T-cell (primary cell): ENCODE measurements at regions of chr2 and their contacts with region 1.

Region 1: DNA sequence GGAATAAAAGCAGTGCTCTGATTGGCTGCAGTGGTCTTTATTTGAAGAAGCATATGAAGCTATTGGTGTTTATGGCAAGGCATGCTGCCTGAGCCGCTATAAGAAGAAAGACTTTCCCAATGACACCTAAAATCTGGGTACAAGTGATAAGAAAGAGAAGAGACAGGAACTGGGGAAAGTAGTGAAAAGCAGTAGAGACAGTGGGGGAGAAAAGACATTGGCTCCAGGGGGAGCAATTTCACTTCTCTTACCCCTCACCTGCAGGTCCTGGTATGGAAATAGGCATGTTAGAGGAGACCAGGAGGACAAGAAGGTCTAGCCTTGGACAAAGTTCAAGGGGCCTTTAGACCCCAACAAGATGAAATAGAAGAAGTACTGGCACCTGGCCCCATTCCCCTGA is 47.1 kb downstream of the PLCL1 start:
- DNase-seq: peak in 1 of 35 experiments; percentile 38
- ATAC-seq: no peak
- H3K4me3 ChIP-seq: no peak overlapping the region
- H3K4me3 Mint-ChIP-seq: peak overlapping the region in 1 of 3 donors; percentile 1
- H3K27ac ChIP-seq: no peak overlapping the region
- H3K27ac Mint-ChIP-seq: peak overlapping the region; percentile 36 to 46
- H3K4me1 ChIP-seq: peaks cover 7 to 38% of the 10 kb centered on the region in 2 experiments
- H3K4me1 Mint-ChIP-seq: peaks cover 80 to 89% (median 85%) of the 10 kb centered on the region in 3 donors
- H3K27me3 ChIP-seq: no peaks in the 10 kb centered on the region
- H3K27me3 Mint-ChIP-seq: no peaks in the 10 kb centered on the region

Region 2: GRCh38 chr2:197793456-197793855 is 58.0 kb before region 1 on chr2:
- CTCF ChIA-PET with region 1: no interaction called
- POLR2A ChIA-PET with region 1: no interaction called
- DNase-seq: no peak
- ATAC-seq: no peak
- H3K4me3 ChIP-seq: no peak overlapping the region
- H3K4me3 Mint-ChIP-seq: no peak overlapping the region
- H3K27ac ChIP-seq: no peak overlapping the region
- H3K27ac Mint-ChIP-seq: no peak overlapping the region
- H3K4me1 ChIP-seq: no peaks in the 10 kb centered on the region
- H3K4me1 Mint-ChIP-seq: no peaks in the 10 kb centered on the region
- H3K27me3 ChIP-seq: peaks cover 2 to 3% of the 10 kb centered on the region in 2 experiments
- H3K27me3 Mint-ChIP-seq: peaks cover 21 to 26% of the 10 kb centered on the region in 2 donors

Region 3: GRCh38 chr2:197838036-197838435 is 13.4 kb before region 1 on chr2:
- CTCF ChIA-PET with region 1: interaction called, 4 to 15 read pairs
- POLR2A ChIA-PET with region 1: interaction called, 8 to 9 read pairs
- DNase-seq: peak in 10 of 35 experiments; percentile 0 to 63 (median 8)
- ATAC-seq: peak; percentile 84 to 92 (median 86)
- H3K4me3 ChIP-seq: peak overlapping the region in 1 of 2 donors; percentile 17
- H3K4me3 Mint-ChIP-seq: peak overlapping the region; percentile 65 to 69 (median 65)
- H3K27ac ChIP-seq: peak overlapping the region; percentile 83
- H3K27ac Mint-ChIP-seq: peak overlapping the region; percentile 91 to 92
- H3K4me1 ChIP-seq: peaks cover 14 to 33% of the 10 kb centered on the region in 2 experiments
- H3K4me1 Mint-ChIP-seq: peaks cover 61 to 65% (median 64%) of the 10 kb centered on the region in 3 donors
- H3K27me3 ChIP-seq: no peaks in the 10 kb centered on the region
- H3K27me3 Mint-ChIP-seq: no peaks in the 10 kb centered on the region

Region 4: GRCh38 chr2:197873293-197873701 is 21.8 kb after region 1 on chr2:
- CTCF ChIA-PET with region 1: interaction called, 3 to 13 read pairs
- POLR2A ChIA-PET with region 1: interaction called in 1 of 2 experiments, 3 read pairs
- DNase-seq: no peak
- ATAC-seq: no peak
- H3K4me3 ChIP-seq: no peak overlapping the region
- H3K4me3 Mint-ChIP-seq: no peak overlapping the region
- H3K27ac ChIP-seq: no peak overlapping the region
- H3K27ac Mint-ChIP-seq: no peak overlapping the region
- H3K4me1 ChIP-seq: peaks cover 25 to 44% of the 10 kb centered on the region in 2 experiments
- H3K4me1 Mint-ChIP-seq: peaks cover 56 to 78% (median 63%) of the 10 kb centered on the region in 3 donors
- H3K27me3 ChIP-seq: no peaks in the 10 kb centered on the region
- H3K27me3 Mint-ChIP-seq: no peaks in the 10 kb centered on the region

Region 5: GRCh38 chr2:198036029-198036879 is 184.8 kb after region 1 on chr2:
- CTCF ChIA-PET with region 1: no interaction called
- POLR2A ChIA-PET with region 1: interaction called in 1 of 2 experiments, 15 read pairs
- DNase-seq: no peak
- ATAC-seq: no peak
- H3K4me3 ChIP-seq: no peak overlapping the region
- H3K4me3 Mint-ChIP-seq: no peak overlapping the region
- H3K27ac ChIP-seq: no peak overlapping the region
- H3K27ac Mint-ChIP-seq: no peak overlapping the region
- H3K4me1 ChIP-seq: peaks cover 7 to 13% of the 10 kb centered on the region in 2 experiments
- H3K4me1 Mint-ChIP-seq: peaks cover 21 to 39% (median 29%) of the 10 kb centered on the region in 3 donors
- H3K27me3 ChIP-seq: no peaks in the 10 kb centered on the region
- H3K27me3 Mint-ChIP-seq: no peaks in the 10 kb centered on the region